ENCODE measurements at regions of chr5 and their contacts with region 1.

Region 1: GRCh38 chr5:44875661-44876605 is 67.2 kb downstream of the MRPS30 start:
- DNase-seq: peak; percentile 98
- ATAC-seq: peak; percentile 93
- H3K4me3 ChIP-seq: peak overlapping the region; percentile 57
- H3K27ac ChIP-seq: peak overlapping the region; percentile 98
- H3K4me1 ChIP-seq: peaks cover 26% of the 10 kb centered on the region
- H3K27me3 ChIP-seq: no peaks in the 10 kb centered on the region
- CTCF ChIP-seq: no peak

Region 2: DNA sequence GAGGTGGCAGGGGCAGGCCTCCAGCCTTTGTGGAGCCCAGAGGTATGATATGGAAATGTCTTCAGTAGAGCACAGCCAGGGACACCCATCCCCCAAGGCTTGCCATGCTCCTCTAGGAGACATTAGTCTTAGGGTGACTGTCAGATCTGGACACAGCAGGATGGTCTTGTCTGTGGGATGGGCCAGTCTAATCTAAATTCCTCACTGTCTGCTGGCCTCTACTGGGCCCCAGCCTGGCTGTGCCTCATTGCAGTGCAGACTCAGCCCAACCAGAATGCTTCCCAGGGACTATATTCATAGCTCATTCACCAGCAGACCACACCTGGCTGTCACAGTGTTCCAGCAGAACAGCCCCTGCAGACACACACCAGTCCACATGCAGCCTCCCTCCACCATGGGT is 196.7 kb before region 1 on chr5:
- CTCF ChIA-PET with region 1: no interaction called
- POLR2A ChIA-PET with region 1: no interaction called
- intact Hi-C with region 1: no loop called
- DNase-seq: no peak
- ATAC-seq: no peak
- H3K4me3 ChIP-seq: no peak overlapping the region
- H3K27ac ChIP-seq: no peak overlapping the region
- H3K4me1 ChIP-seq: no peaks in the 10 kb centered on the region
- H3K27me3 ChIP-seq: peaks cover 7% of the 10 kb centered on the region; the same call in 1 of the 2 replicates
- CTCF ChIP-seq: no peak

Region 3: GRCh38 chr5:44808435-44809214 is 67.3 kb before region 1 on chr5 and contains the start of gene MRPS30:
- CTCF ChIA-PET with region 1: no interaction called
- POLR2A ChIA-PET with region 1: no interaction called
- intact Hi-C with region 1: loop called (anchors 2 kb)
- DNase-seq: peak; percentile 100
- ATAC-seq: peak; percentile 94
- H3K4me3 ChIP-seq: peak within 1 kb of the TSS; percentile 91
- H3K27ac ChIP-seq: peak within 1 kb of the TSS; percentile 51
- H3K4me1 ChIP-seq: peaks cover 29% of the 10 kb centered on the region
- H3K27me3 ChIP-seq: no peaks in the 10 kb centered on the region
- CTCF ChIP-seq: peak; percentile 77
- total RNA-seq, gene MRPS30: 139 and 149 TPM in 2 replicates

Region 4: DNA sequence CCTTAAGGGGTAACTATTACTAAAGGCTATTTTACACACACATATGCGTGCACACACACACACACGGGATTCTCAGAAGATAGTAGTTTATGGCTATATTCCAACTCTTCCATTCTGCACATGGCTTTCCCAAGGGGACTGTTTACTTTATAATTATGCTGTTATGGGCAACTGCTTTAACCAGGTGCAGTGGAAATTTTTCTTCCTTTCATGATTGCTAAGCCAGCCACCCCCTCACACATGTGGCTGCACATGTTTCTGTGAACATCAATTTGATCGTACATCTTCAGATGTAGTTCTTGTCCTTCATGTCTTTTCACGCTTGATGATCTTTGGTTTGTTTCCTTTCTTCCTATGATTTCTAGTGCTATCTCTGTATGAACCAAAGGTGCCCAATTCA is 30.2 kb before region 1 on chr5:
- CTCF ChIA-PET with region 1: no interaction called
- POLR2A ChIA-PET with region 1: no interaction called
- intact Hi-C with region 1: no loop called
- DNase-seq: no peak
- ATAC-seq: no peak
- H3K4me3 ChIP-seq: no peak overlapping the region
- H3K27ac ChIP-seq: no peak overlapping the region
- H3K4me1 ChIP-seq: peaks cover 11% of the 10 kb centered on the region
- H3K27me3 ChIP-seq: no peaks in the 10 kb centered on the region
- CTCF ChIP-seq: no peak

Region 5: GRCh38 chr5:44920411-44920810 is 44.5 kb after region 1 on chr5:
- CTCF ChIA-PET with region 1: no interaction called
- POLR2A ChIA-PET with region 1: no interaction called
- intact Hi-C with region 1: loop called (anchors 5 kb)
- DNase-seq: no peak
- ATAC-seq: no peak
- H3K4me3 ChIP-seq: no peak overlapping the region
- H3K27ac ChIP-seq: no peak overlapping the region
- H3K4me1 ChIP-seq: peaks cover 16% of the 10 kb centered on the region
- H3K27me3 ChIP-seq: no peaks in the 10 kb centered on the region
- CTCF ChIP-seq: no peak

Region 6: GRCh38 chr5:44952376-44952775 is 76.4 kb after region 1 on chr5:
- CTCF ChIA-PET with region 1: no interaction called
- POLR2A ChIA-PET with region 1: no interaction called
- intact Hi-C with region 1: loop called (anchors 5 kb)
- DNase-seq: peak; percentile 74
- ATAC-seq: peak; percentile 63
- H3K4me3 ChIP-seq: no peak overlapping the region
- H3K27ac ChIP-seq: no peak overlapping the region
- H3K4me1 ChIP-seq: no peaks in the 10 kb centered on the region
- H3K27me3 ChIP-seq: no peaks in the 10 kb centered on the region
- CTCF ChIP-seq: peak; percentile 93

Region 7: DNA sequence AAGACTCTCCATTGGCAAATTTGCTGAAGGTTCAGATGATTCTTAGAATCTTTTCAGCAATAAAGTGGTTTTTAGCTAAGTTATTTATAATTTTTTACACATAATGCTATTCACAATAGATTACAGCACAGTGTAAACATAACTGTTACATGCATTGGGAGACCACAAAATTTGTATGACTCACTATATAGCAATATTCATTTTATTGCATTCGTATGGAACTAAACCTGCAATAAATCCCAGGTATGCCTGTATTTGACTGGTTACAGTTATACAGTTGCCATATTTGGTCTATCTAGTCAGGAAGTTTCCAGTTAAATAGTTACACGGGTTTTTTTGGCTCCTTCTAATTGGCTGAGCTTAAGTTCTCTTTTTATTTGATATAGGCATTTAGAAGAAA is 153.6 kb after region 1 on chr5:
- CTCF ChIA-PET with region 1: no interaction called
- POLR2A ChIA-PET with region 1: no interaction called
- intact Hi-C with region 1: loop called (anchors 5 kb)
- DNase-seq: peak; percentile 68
- ATAC-seq: peak; percentile 96
- H3K4me3 ChIP-seq: no peak overlapping the region
- H3K27ac ChIP-seq: no peak overlapping the region
- H3K4me1 ChIP-seq: no peaks in the 10 kb centered on the region; the same call in 1 of the 2 replicates
- H3K27me3 ChIP-seq: no peaks in the 10 kb centered on the region
- CTCF ChIP-seq: no peak

Measured in PC-3 (cell line).